Right ventricle myocardium superior (tissue), 1 donor: ENCODE measurements at regions of chr7 and their contacts with region 1.

Region 1: GRCh38 chr7:46603780-46604179 is 682.7 kb upstream of the IGFBP3 start:
- DNase-seq: peak; percentile 95
- ATAC-seq: peak; percentile 93

Region 2: DNA sequence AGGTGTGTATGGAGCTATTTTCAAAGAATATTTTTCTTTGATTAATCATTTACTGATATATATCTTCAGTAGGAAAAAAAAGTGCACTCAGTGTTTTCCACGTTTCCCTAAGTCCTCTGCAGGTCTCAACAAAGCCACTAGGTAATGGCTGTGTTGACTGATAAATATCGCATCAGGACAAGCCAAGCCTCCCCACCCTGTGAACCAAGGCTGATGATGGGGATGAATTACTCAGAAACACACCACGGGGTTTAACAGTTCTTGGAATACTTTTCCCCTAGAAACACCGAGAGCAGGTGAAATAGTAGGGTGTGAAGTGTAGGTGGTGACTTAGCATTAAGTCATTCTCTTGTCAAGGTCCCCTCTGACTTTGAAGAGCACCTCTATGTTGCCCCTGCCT is 259.3 kb before region 1 on chr7:
- intact Hi-C with region 1: no loop called
- DNase-seq: no peak
- ATAC-seq: no peak

Region 3: GRCh38 chr7:47074702-47075153 is 470.9 kb after region 1 on chr7:
- intact Hi-C with region 1: loop called (anchors 10 kb)
- DNase-seq: no peak
- ATAC-seq: peak; percentile 76